ENCODE measurements at regions of chr1 and their contacts with region 1.

Region 1: DNA sequence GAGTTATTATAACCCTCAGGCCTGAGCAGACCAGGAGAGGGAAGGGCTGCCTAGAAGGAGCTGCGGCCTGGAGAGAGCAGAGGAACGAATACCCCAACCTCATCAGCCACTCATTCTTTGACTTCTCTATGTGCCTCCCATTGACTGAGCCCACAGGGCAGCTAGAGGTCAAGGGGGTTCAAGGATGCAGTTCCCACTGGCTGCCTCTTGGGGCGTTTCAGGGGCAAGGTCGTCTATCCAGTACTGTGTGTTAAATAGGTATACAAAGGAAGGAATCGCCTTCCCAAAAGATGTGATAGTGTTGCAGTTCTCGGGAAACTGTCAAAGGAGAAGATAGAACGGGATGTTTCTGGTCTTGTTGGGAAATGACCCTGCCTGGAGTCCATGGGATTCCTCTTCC is 250.6 kb downstream of the PRDM2 start:
- DNase-seq: no peak
- ATAC-seq: no peak
- H3K4me3 ChIP-seq: no peak overlapping the region
- H3K27ac ChIP-seq: no peak overlapping the region
- H3K4me1 ChIP-seq: no peaks in the 10 kb centered on the region
- H3K27me3 ChIP-seq: peaks cover 0 to 6% (median 0%) of the 10 kb centered on the region in 3 donors
- CTCF ChIP-seq: no peak

Region 2: GRCh38 chr1:13828454-13829151 is 122.0 kb before region 1 on chr1:
- intact Hi-C with region 1: loop called in 1 of 2 experiments (anchors 10 kb)
- DNase-seq: peak in 1 of 2 donors; percentile 67
- ATAC-seq: peak; percentile 40 to 67 (median 59)
- H3K4me3 ChIP-seq: no peak overlapping the region
- H3K27ac ChIP-seq: no peak overlapping the region
- H3K4me1 ChIP-seq: no peaks in the 10 kb centered on the region
- H3K27me3 ChIP-seq: no peaks in the 10 kb centered on the region
- CTCF ChIP-seq: peak; percentile 43

Region 3: GRCh38 chr1:14017531-14017961 is 66.9 kb after region 1 on chr1:
- intact Hi-C with region 1: no loop called
- DNase-seq: no peak
- ATAC-seq: no peak
- H3K4me3 ChIP-seq: no peak overlapping the region
- H3K27ac ChIP-seq: no peak overlapping the region
- H3K4me1 ChIP-seq: no peaks in the 10 kb centered on the region
- H3K27me3 ChIP-seq: peaks cover 0 to 7% (median 2%) of the 10 kb centered on the region in 3 donors
- CTCF ChIP-seq: no peak

Measured in psoas muscle (tissue), 8 donors.